H1 (cell line): ENCODE measurements at regions of chr17 and their contacts with region 1.

Region 1: GRCh38 chr17:17859909-17860765 is 23.4 kb upstream of the SREBF1 start:
- DNase-seq: peak in 1 of 2 experiments; percentile 86
- H3K4me3 ChIP-seq: no peak overlapping the region
- H3K27ac ChIP-seq: no peak overlapping the region
- H3K4me1 ChIP-seq: peaks cover 0 to 10% (median 3%) of the 10 kb centered on the region in 4 experiments; a peak in 2 of 7 replicates
- H3K27me3 ChIP-seq: no peaks in the 10 kb centered on the region
- CTCF ChIP-seq: peak; percentile 96 to 100 (median 99)
- EP300 ChIP-seq: peak in 1 of 2 experiments; percentile 63; a peak in 1 of 3 replicates
- POLR2A ChIP-seq: no peak
- RAD21 ChIP-seq: peak; percentile 94 to 96

Region 2: DNA sequence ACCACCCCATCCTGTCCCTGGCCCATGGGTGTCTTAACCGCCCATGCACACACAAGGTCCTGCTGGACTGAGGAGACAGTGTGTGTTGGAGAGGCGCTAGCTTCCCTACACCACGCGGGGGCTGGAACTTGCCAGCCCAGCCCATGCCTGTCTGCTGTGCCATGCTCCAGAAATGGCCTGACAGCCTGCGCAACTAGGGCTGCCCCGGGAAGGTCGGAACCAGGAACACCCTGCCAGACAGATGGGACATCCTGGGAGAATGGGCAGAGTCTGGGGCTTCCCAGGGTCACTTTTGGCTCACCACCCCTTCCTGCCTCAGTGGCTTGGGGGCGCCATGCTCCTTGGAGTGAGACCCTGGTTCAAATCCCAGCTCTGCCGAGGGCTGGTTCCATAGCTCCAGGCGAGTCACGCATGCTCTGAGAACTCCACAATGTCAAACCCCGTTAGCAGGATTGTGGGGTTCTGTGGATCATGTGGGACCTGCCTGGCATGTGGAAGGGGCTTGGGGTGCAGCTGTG is 59.6 kb before region 1 on chr17:
- CTCF ChIA-PET with region 1: interaction called, 375 read pairs
- POLR2A ChIA-PET with region 1: interaction called, 3 read pairs
- DNase-seq: no peak
- H3K4me3 ChIP-seq: no peak overlapping the region
- H3K27ac ChIP-seq: no peak overlapping the region
- H3K4me1 ChIP-seq: peaks cover 0 to 9% (median 0%) of the 10 kb centered on the region in 4 experiments; a peak in 3 of 7 replicates
- H3K27me3 ChIP-seq: no peaks in the 10 kb centered on the region
- CTCF ChIP-seq: peak; percentile 9 to 25 (median 23)
- EP300 ChIP-seq: no peak
- POLR2A ChIP-seq: no peak
- RAD21 ChIP-seq: peak; percentile 24 to 49; a peak in 3 of 4 replicates

Region 3: DNA sequence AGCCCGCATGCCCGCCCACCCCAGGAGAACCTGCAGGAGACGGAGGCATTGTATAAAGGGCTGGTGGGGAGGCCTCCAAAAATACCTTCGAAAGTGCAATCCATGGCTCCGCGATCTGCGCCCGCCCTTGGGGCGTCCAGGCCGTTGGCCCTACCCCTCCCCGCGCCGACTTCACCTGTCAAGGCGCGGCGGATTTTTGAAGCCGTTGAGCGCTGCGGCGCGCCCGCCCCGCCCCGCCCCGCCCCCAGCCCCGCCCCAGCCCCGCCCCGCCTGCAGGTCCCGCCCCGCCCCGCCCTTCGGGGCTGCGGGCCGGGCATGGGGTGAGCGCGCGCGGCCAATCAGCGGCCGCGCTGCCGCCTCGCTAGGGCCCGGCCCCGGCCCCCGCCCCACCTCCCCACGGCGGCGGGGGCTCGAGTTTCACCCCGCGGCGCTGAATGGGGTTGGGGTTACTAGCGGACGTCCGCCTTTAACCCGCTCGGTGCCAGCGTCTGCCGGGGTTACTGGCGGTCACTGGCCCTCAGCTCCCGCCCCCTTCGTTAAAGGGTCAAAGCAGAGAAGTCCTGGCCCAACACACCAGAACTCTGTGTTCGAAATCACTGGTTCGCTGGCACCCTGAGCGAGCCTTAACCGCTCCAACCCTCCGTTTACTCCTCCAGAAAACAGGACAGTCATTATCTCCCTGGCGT is 36.6 kb before region 1 on chr17:
- CTCF ChIA-PET with region 1: interaction called, 375 read pairs
- POLR2A ChIA-PET with region 1: interaction called, 5 read pairs
- DNase-seq: peak in 1 of 2 experiments; percentile 93
- H3K4me3 ChIP-seq: peak overlapping the region in 3 of 4 experiments; percentile 29 to 51 (median 38); a peak in 7 of 8 replicates
- H3K27ac ChIP-seq: peak overlapping the region; percentile 78
- H3K4me1 ChIP-seq: peaks cover 13 to 37% (median 27%) of the 10 kb centered on the region in 4 experiments
- H3K27me3 ChIP-seq: no peaks in the 10 kb centered on the region; a peak in 1 of 7 replicates
- CTCF ChIP-seq: no peak
- EP300 ChIP-seq: peak in 1 of 2 experiments; percentile 87; a peak in 2 of 3 replicates
- POLR2A ChIP-seq: no peak
- RAD21 ChIP-seq: no peak

Region 4: DNA sequence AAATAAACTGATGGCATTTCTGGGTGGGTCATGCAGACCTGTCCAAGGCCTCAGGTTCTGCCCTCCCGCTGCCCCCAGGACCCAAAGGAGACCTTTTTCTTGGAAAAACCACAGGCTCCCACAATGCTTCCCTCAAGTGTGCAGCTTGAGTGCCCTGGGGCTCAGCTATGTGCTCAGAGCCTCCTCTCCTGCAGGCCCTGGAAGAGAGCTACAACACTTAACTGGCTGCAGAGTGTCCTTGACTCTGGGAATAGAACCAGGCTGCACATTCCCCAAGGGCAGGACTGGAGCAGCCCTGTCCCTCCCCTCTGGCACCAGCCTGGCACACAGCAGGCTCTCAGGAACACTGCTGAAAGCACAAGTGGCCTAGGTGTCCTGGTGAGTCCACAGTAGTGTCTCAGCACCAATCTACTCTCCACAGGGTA is 18.5 kb before region 1 on chr17:
- CTCF ChIA-PET with region 1: interaction called, 44 read pairs
- POLR2A ChIA-PET with region 1: interaction called, 122 read pairs
- DNase-seq: no peak
- H3K4me3 ChIP-seq: no peak overlapping the region
- H3K27ac ChIP-seq: no peak overlapping the region
- H3K4me1 ChIP-seq: peaks cover 19 to 44% (median 34%) of the 10 kb centered on the region in 4 experiments
- H3K27me3 ChIP-seq: no peaks in the 10 kb centered on the region; a peak in 1 of 7 replicates
- CTCF ChIP-seq: no peak
- EP300 ChIP-seq: no peak
- POLR2A ChIP-seq: no peak
- RAD21 ChIP-seq: no peak

Region 5: GRCh38 chr17:17849845-17850373 is 10.2 kb before region 1 on chr17:
- CTCF ChIA-PET with region 1: interaction called, 44 read pairs
- POLR2A ChIA-PET with region 1: interaction called, 4 read pairs
- DNase-seq: no peak
- H3K4me3 ChIP-seq: no peak overlapping the region
- H3K27ac ChIP-seq: no peak overlapping the region
- H3K4me1 ChIP-seq: peaks cover 0 to 30% (median 19%) of the 10 kb centered on the region in 4 experiments; a peak in 6 of 7 replicates
- H3K27me3 ChIP-seq: no peaks in the 10 kb centered on the region; a peak in 1 of 7 replicates
- CTCF ChIP-seq: no peak
- EP300 ChIP-seq: no peak
- POLR2A ChIP-seq: no peak
- RAD21 ChIP-seq: no peak

Region 6: DNA sequence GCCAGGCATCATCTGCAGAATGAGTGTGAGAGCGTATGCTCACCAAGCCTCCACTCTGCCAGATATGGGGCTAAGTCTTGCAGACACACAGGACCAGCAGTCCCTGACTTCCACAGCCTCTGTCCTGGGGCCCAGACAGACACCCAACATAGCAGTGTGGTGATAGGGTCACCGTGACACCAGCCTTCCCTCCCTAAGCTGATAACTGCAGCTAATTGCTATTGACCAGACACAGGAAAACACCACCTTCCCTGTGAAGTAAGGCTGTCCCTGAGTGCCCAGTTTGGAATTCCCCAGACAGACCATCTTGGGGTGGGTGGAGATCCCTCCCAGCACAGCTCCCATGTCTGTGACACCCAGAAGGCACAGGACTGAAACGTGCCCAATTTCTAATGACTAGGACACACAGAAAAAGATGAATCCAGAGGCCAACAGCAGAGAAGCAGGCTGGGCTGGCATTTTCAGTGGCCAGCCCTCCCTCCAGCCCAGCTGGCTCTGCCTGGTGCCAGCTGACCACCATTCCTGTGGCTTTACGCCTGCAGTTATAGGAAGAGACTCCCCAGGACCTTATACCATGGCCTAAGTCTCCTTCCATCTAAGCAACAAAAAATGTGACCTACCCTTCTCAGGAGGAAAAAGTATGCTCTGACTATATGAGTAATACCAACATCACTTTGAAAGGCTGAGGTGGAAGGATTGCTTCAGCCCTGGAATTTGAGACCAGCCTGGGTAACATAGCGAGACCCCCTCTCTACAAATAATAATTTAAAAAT is 148.5 kb after region 1 on chr17:
- CTCF ChIA-PET with region 1: no interaction called
- POLR2A ChIA-PET with region 1: no interaction called
- DNase-seq: no peak
- H3K4me3 ChIP-seq: no peak overlapping the region
- H3K27ac ChIP-seq: no peak overlapping the region
- H3K4me1 ChIP-seq: peaks cover 0 to 7% (median 0%) of the 10 kb centered on the region in 4 experiments; a peak in 1 of 7 replicates
- H3K27me3 ChIP-seq: no peaks in the 10 kb centered on the region
- CTCF ChIP-seq: no peak
- EP300 ChIP-seq: no peak
- POLR2A ChIP-seq: no peak
- RAD21 ChIP-seq: no peak